ENCODE measurements at regions of chrX and their contacts with region 1.

Region 1: GRCh38 chrX:150486011-150486410 is 82.4 kb upstream of the MTM1 start:
- DNase-seq: peak; percentile 67
- H3K4me3 Mint-ChIP-seq: no peak overlapping the region
- H3K27ac Mint-ChIP-seq: no peak overlapping the region
- H3K4me1 Mint-ChIP-seq: peaks cover 41% of the 10 kb centered on the region
- H3K27me3 Mint-ChIP-seq: no peaks in the 10 kb centered on the region

Region 2: GRCh38 chrX:150365051-150365989 is 120.7 kb before region 1 on chrX:
- CTCF ChIA-PET with region 1: interaction called, 70 read pairs
- DNase-seq: peak; percentile 79
- H3K4me3 Mint-ChIP-seq: peak overlapping the region; percentile 78
- H3K27ac Mint-ChIP-seq: peak overlapping the region; percentile 64
- H3K4me1 Mint-ChIP-seq: peaks cover 28% of the 10 kb centered on the region
- H3K27me3 Mint-ChIP-seq: peaks cover 54% of the 10 kb centered on the region

Region 3: DNA sequence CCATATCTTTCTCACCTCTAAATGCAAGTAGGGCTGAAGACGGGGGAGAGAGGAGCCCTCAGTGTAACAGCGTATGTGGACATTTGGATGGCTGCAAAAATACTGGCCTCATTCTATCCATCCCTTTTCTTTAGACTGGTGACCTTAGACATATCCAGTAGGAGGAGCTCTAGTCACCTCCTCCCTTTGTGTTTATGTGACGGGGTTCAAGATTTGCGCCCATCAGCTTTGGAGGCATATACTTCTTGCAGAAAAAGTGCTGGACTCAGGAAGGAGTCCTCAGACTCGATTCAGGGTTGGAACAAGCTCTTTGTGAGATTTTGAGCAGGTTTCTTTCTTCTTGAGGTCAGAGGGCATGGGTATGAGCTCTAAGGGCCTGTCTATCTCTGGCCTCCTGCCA is 36.7 kb before region 1 on chrX:
- CTCF ChIA-PET with region 1: interaction called, 96 read pairs
- DNase-seq: no peak
- H3K4me3 Mint-ChIP-seq: no peak overlapping the region
- H3K27ac Mint-ChIP-seq: no peak overlapping the region
- H3K4me1 Mint-ChIP-seq: peaks cover 46% of the 10 kb centered on the region
- H3K27me3 Mint-ChIP-seq: no peaks in the 10 kb centered on the region

Region 4: GRCh38 chrX:150649096-150649870 is 163.3 kb after region 1 on chrX:
- CTCF ChIA-PET with region 1: no interaction called
- DNase-seq: no peak
- H3K4me3 Mint-ChIP-seq: no peak overlapping the region
- H3K27ac Mint-ChIP-seq: no peak overlapping the region
- H3K4me1 Mint-ChIP-seq: peaks cover 12% of the 10 kb centered on the region
- H3K27me3 Mint-ChIP-seq: no peaks in the 10 kb centered on the region